Natural killer cell (primary cell): ENCODE measurements at regions of chr16 and their contacts with region 1.

Region 1: GRCh38 chr16:89700100-89700648 is 1.3 kb downstream of the SPATA2L start:
- DNase-seq: peak; percentile 97 to 99
- ATAC-seq: peak; percentile 43 to 57 (median 49)
- H3K4me3 ChIP-seq: peak overlapping the region; percentile 38
- H3K4me3 Mint-ChIP-seq: peak overlapping the region; percentile 72
- H3K27ac ChIP-seq: peak overlapping the region; percentile 83
- H3K27ac Mint-ChIP-seq: peak overlapping the region; percentile 81 to 86
- H3K4me1 ChIP-seq: peaks cover 44% of the 10 kb centered on the region
- H3K4me1 Mint-ChIP-seq: peaks cover 12 to 32% of the 10 kb centered on the region in 2 donors
- H3K27me3 ChIP-seq: no peaks in the 10 kb centered on the region
- H3K27me3 Mint-ChIP-seq: no peaks in the 10 kb centered on the region
- CTCF ChIP-seq: peak; percentile 79

Region 2: GRCh38 chr16:89623511-89624261 is 76.5 kb before region 1 on chr16:
- intact Hi-C with region 1: no loop called
- DNase-seq: no peak
- ATAC-seq: no peak
- H3K4me3 ChIP-seq: no peak overlapping the region
- H3K4me3 Mint-ChIP-seq: no peak overlapping the region
- H3K27ac ChIP-seq: no peak overlapping the region
- H3K27ac Mint-ChIP-seq: no peak overlapping the region
- H3K4me1 ChIP-seq: no peaks in the 10 kb centered on the region
- H3K4me1 Mint-ChIP-seq: no peaks in the 10 kb centered on the region
- H3K27me3 ChIP-seq: no peaks in the 10 kb centered on the region
- H3K27me3 Mint-ChIP-seq: peaks cover 7 to 22% of the 10 kb centered on the region in 2 donors
- CTCF ChIP-seq: no peak

Region 3: DNA sequence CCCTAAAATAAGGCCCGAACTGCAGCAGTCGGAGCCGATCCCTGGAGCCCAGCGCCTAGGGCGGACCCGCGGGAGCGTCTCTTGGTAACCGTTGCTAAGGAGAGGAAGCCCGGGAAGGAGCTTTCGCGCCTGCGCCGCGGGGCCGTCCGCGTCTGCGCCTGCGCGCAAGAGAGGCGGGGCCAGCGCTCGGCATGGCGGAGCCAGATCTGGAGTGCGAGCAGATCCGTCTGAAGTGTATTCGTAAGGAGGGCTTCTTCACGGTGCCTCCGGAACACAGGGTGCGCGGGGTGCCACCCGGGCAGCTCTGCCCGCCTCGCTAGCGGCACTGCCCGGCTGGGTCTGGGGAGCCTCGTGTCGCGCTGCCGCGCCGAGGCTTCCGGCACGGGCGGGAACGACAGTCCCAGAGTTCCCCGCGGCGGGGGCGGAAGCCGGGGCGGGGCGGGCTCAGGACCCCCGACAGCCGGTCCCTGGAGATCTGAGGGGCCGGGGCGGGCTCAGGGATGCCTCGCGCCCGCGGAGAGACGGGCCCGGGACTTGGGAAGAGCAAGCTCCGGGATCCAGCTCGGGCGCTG is 13.6 kb before region 1 on chr16 and contains the start of gene CDK10:
- intact Hi-C with region 1: loop called (anchors 2 kb)
- DNase-seq: peak; percentile 92 to 94
- ATAC-seq: peak; percentile 86 to 87 (median 86)
- H3K4me3 ChIP-seq: peak within 1 kb of the TSS; percentile 52
- H3K4me3 Mint-ChIP-seq: peak within 1 kb of the TSS; percentile 96
- H3K27ac ChIP-seq: peak within 1 kb of the TSS; percentile 60
- H3K27ac Mint-ChIP-seq: peak within 1 kb of the TSS; percentile 89 to 92
- H3K4me1 ChIP-seq: peaks cover 19% of the 10 kb centered on the region
- H3K4me1 Mint-ChIP-seq: peaks cover 7 to 20% of the 10 kb centered on the region in 2 donors
- H3K27me3 ChIP-seq: no peaks in the 10 kb centered on the region
- H3K27me3 Mint-ChIP-seq: no peaks in the 10 kb centered on the region
- CTCF ChIP-seq: no peak
- total RNA-seq, gene CDK10: 102 to 123 (median 114) TPM

Region 4: DNA sequence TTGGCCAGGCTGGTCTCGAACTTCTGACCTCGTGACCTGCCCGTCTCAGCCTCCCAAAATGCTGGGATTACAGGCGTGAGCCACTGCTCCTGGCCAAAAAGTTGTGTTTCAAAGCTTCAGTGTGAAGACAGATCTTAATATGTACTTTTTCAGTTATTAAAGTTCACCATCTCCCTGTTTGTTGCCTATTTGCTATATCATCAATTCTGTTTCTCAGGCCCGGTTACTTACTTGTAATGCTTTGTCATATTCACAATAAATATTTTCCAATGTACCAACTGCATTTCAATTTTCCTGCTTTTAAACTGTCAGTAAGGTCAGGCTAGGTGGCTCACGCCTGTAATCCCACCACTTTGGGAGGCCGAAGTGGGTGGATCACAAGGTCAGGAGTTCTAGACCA is 93.8 kb after region 1 on chr16:
- intact Hi-C with region 1: loop called (anchors 1 kb)
- DNase-seq: no peak
- ATAC-seq: no peak
- H3K4me3 ChIP-seq: no peak overlapping the region
- H3K4me3 Mint-ChIP-seq: no peak overlapping the region
- H3K27ac ChIP-seq: no peak overlapping the region
- H3K27ac Mint-ChIP-seq: no peak overlapping the region
- H3K4me1 ChIP-seq: peaks cover 3% of the 10 kb centered on the region
- H3K4me1 Mint-ChIP-seq: peaks cover 11 to 13% of the 10 kb centered on the region in 2 donors
- H3K27me3 ChIP-seq: no peaks in the 10 kb centered on the region
- H3K27me3 Mint-ChIP-seq: no peaks in the 10 kb centered on the region
- CTCF ChIP-seq: no peak